ENCODE measurements at regions of chr3 and their contacts with region 1.

Region 1: GRCh38 chr3:120095226-120095978 is 1.2 kb upstream of the GSK3B start:
- DNase-seq: peak; percentile 61 to 94 (median 78)
- ATAC-seq: peak; percentile 19
- H3K4me3 ChIP-seq: peak overlapping the region; percentile 97
- H3K4me3 Mint-ChIP-seq: no peak overlapping the region
- H3K27ac ChIP-seq: peak overlapping the region; percentile 100
- H3K27ac Mint-ChIP-seq: no peak overlapping the region
- H3K4me1 ChIP-seq: peaks cover 20% of the 10 kb centered on the region
- H3K4me1 Mint-ChIP-seq: peaks cover 26% of the 10 kb centered on the region
- H3K27me3 ChIP-seq: no peaks in the 10 kb centered on the region
- H3K27me3 Mint-ChIP-seq: no peaks in the 10 kb centered on the region
- CTCF ChIP-seq: no peak

Region 2: GRCh38 chr3:119469381-119470189 is 625.8 kb before region 1 on chr3:
- CTCF ChIA-PET with region 1: no interaction called
- POLR2A ChIA-PET with region 1: interaction called, 11 read pairs
- intact Hi-C with region 1: loop called in 1 of 2 experiments (anchors 10 kb)
- DNase-seq: peak in 3 of 14 experiments; percentile 21 to 32 (median 27)
- ATAC-seq: peak; percentile 20
- H3K4me3 ChIP-seq: peak overlapping the region; percentile 86
- H3K4me3 Mint-ChIP-seq: peak overlapping the region; percentile 98
- H3K27ac ChIP-seq: peak overlapping the region; percentile 37 to 81
- H3K27ac Mint-ChIP-seq: peak overlapping the region; percentile 90
- H3K4me1 ChIP-seq: peaks cover 28% of the 10 kb centered on the region
- H3K4me1 Mint-ChIP-seq: peaks cover 29% of the 10 kb centered on the region
- H3K27me3 ChIP-seq: no peaks in the 10 kb centered on the region
- H3K27me3 Mint-ChIP-seq: no peaks in the 10 kb centered on the region
- CTCF ChIP-seq: no peak

Region 3: DNA sequence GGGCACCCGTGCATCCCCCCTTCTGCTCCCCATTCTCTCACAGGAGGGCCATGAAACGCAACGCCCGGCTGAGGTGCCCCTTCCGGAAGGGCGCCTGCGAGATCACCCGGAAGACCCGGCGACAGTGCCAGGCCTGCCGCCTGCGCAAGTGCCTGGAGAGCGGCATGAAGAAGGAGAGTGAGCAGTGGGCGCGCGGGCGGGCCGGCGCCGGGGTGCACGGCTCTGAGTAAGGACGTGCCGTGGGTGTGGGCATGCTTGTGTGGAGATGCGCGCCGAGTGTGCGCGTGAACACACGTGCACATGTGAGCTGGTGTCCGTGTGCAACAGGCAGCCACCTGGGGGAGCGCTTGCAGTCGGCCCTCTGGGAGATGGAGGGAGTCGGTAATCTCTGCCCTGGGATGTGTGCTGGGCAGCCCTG is 285.4 kb before region 1 on chr3:
- CTCF ChIA-PET with region 1: no interaction called
- POLR2A ChIA-PET with region 1: interaction called, 10 read pairs
- intact Hi-C with region 1: no loop called
- DNase-seq: peak; percentile 27 to 76 (median 46)
- ATAC-seq: peak; percentile 96
- H3K4me3 ChIP-seq: peak overlapping the region; percentile 69
- H3K4me3 Mint-ChIP-seq: peak overlapping the region; percentile 86
- H3K27ac ChIP-seq: no peak overlapping the region
- H3K27ac Mint-ChIP-seq: peak overlapping the region; percentile 43
- H3K4me1 ChIP-seq: peaks cover 17% of the 10 kb centered on the region
- H3K4me1 Mint-ChIP-seq: peaks cover 12% of the 10 kb centered on the region
- H3K27me3 ChIP-seq: no peaks in the 10 kb centered on the region
- H3K27me3 Mint-ChIP-seq: no peaks in the 10 kb centered on the region
- CTCF ChIP-seq: peak; percentile 27

Region 4: DNA sequence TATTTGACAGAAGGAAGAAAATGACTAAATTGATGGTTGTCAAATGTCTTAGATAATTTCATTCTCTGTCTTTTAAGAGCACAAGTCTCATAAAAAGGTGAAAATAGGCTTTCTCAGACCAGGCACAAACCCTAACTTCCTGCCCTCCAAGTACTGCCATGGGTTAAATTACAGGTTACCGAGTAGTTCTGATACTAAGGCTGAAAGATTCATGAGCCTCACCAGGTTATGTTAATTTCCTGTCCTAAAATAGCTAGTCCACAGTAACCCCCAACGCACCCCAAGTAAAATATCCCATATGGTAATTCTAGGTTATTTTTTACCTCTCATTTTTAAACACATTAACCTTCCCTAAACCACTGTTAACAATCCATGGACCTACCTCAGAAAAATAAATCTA is 43.2 kb before region 1 on chr3:
- CTCF ChIA-PET with region 1: no interaction called
- POLR2A ChIA-PET with region 1: interaction called, 19 read pairs
- intact Hi-C with region 1: loop called in 1 of 2 experiments (anchors 5 kb)
- DNase-seq: peak in 2 of 14 experiments; percentile 5 to 15
- ATAC-seq: no peak
- H3K4me3 ChIP-seq: no peak overlapping the region
- H3K4me3 Mint-ChIP-seq: peak overlapping the region; percentile 23
- H3K27ac ChIP-seq: no peak overlapping the region
- H3K27ac Mint-ChIP-seq: peak overlapping the region; percentile 34
- H3K4me1 ChIP-seq: peaks cover 20% of the 10 kb centered on the region
- H3K4me1 Mint-ChIP-seq: peaks cover 85% of the 10 kb centered on the region
- H3K27me3 ChIP-seq: no peaks in the 10 kb centered on the region
- H3K27me3 Mint-ChIP-seq: no peaks in the 10 kb centered on the region
- CTCF ChIP-seq: no peak

Region 5: GRCh38 chr3:120263792-120264191 is 168.4 kb after region 1 on chr3:
- CTCF ChIA-PET with region 1: no interaction called
- POLR2A ChIA-PET with region 1: no interaction called
- intact Hi-C with region 1: no loop called
- DNase-seq: no peak
- ATAC-seq: no peak
- H3K4me3 ChIP-seq: no peak overlapping the region
- H3K4me3 Mint-ChIP-seq: no peak overlapping the region
- H3K27ac ChIP-seq: no peak overlapping the region
- H3K27ac Mint-ChIP-seq: no peak overlapping the region
- H3K4me1 ChIP-seq: no peaks in the 10 kb centered on the region
- H3K4me1 Mint-ChIP-seq: no peaks in the 10 kb centered on the region
- H3K27me3 ChIP-seq: peaks cover 0 to 2% of the 10 kb centered on the region in 2 experiments
- H3K27me3 Mint-ChIP-seq: peaks cover 21% of the 10 kb centered on the region
- CTCF ChIP-seq: no peak

Region 6: GRCh38 chr3:120348981-120349818 is 253.8 kb after region 1 on chr3 and contains the start of gene LRRC58:
- CTCF ChIA-PET with region 1: no interaction called
- POLR2A ChIA-PET with region 1: interaction called, 62 read pairs
- intact Hi-C with region 1: loop called (anchors 2 kb)
- DNase-seq: peak; percentile 78 to 96 (median 87)
- ATAC-seq: peak; percentile 86
- H3K4me3 ChIP-seq: peak within 1 kb of the TSS; percentile 65
- H3K4me3 Mint-ChIP-seq: peak within 1 kb of the TSS; percentile 93
- H3K27ac ChIP-seq: peak within 1 kb of the TSS; percentile 65 to 74
- H3K27ac Mint-ChIP-seq: peak within 1 kb of the TSS; percentile 94
- H3K4me1 ChIP-seq: peaks cover 18% of the 10 kb centered on the region
- H3K4me1 Mint-ChIP-seq: peaks cover 52% of the 10 kb centered on the region
- H3K27me3 ChIP-seq: peaks cover 0 to 3% of the 10 kb centered on the region in 2 experiments
- H3K27me3 Mint-ChIP-seq: no peaks in the 10 kb centered on the region
- CTCF ChIP-seq: peak; percentile 45
- total RNA-seq, gene LRRC58: 16.6 to 17.7 TPM

Measured in CD4-positive, alpha-beta T cell (primary cell).